ENCODE measurements at regions of chr6 and their contacts with region 1.

Region 1: DNA sequence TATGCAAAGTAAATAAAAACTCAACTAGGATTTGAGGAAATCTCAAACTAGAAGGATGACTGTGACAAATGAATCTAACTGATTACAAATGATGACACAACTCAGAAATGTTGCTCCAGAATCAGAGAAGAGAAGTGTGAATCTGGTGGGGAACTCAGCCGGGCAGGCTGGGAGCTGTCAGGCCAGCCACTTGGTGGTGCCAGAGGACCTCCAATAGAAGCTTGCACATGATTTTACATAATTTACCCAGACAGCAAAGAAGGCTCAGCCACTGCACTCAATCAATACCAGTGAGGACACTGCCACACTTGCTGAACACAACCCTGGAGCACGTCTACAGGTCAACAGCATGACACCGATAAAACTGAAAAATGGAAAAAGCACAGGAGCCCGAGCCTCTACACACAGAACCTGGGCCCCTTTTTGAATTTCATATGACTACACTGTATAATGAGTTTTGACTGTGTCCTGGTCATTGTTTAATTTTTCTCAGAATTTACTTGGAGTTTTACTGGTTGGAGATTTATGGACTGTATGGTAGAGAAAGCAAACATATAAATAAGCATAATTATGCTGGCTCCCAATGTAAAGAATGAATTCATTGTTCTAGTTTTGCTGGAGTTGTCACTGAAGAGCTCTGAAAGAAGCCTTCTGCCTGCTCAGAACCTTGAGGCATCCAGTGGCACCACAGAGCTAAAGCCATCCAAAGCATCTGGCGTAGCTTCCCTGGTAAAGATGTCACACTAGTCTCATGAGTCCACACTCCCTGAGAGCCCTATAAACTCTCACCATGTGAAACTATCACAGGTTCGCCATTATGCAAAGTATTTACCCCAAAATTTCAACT is 296.5 kb downstream of the THBS2 start:
- DNase-seq: no peak
- H3K4me3 ChIP-seq: no peak overlapping the region
- H3K27ac ChIP-seq: no peak overlapping the region
- H3K4me1 ChIP-seq: peaks cover 7 to 24% (median 14%) of the 10 kb centered on the region in 4 donors
- H3K27me3 ChIP-seq: no peaks in the 10 kb centered on the region
- CTCF ChIP-seq: peak; percentile 78 to 88 (median 84)
- EP300 ChIP-seq: no peak
- POLR2A ChIP-seq: no peak

Region 2: DNA sequence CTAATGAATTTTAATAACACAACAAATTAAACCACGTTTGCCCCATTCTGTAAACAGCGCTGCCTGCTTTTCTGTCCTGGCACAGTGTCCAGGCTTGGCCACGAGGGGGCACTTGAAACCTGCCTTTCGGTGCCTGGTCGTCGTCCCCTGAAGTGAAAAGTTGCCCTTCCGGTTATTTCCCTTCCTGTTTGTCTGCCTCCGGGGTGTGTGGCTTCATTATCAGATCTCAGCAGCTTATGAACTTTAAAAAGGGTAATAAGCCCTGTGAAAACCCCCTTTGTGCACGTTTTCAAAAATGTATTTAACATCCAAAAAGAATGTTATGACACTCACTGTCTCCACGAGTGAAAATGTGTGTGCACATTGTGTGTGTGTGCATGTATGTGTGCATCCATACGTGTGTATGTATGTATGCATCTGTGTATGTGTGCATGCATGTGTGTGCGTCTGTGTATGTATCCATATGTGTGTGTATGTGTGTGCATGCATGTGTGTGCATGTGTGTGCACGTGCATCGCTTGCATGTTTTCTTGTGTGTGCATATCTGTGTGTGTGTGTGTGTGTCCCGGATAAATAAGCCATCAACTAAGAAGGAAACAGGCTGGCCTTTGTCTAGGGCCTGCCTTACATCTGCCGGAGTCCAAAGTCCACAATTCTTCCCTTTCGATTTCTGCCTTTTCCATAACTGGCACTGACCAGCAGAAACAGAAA is 61.9 kb before region 1 on chr6:
- intact Hi-C with region 1: loop called (anchors 2 kb)
- DNase-seq: no peak
- H3K4me3 ChIP-seq: peak overlapping the region; percentile 14 to 44 (median 28)
- H3K27ac ChIP-seq: no peak overlapping the region
- H3K4me1 ChIP-seq: peaks cover 3 to 34% (median 32%) of the 10 kb centered on the region in 4 donors
- H3K27me3 ChIP-seq: no peaks in the 10 kb centered on the region
- CTCF ChIP-seq: peak in 2 of 3 experiments; percentile 91 to 93
- EP300 ChIP-seq: no peak
- POLR2A ChIP-seq: no peak

Region 3: DNA sequence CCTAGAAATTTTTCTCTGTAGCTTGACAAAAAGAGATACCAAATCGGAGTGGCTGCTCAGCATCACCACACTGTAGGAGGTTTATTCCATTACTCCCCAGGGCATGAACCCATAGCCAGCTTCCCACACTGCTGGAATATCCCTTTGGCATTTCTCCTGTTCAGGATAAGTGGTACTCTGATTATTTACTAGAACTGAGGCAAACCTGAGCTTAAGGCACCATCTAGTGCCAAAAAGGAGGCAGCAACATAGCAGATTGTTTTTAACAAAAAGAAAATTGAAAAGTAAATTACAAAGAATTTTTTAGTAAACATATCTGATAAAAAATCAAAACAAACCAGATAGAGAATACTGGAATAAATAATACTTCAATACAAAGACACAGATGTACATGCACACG is 563.0 kb after region 1 on chr6:
- intact Hi-C with region 1: loop called (anchors 5 kb)
- DNase-seq: no peak
- H3K4me3 ChIP-seq: no peak overlapping the region
- H3K27ac ChIP-seq: no peak overlapping the region
- H3K4me1 ChIP-seq: peaks cover 0 to 6% (median 0%) of the 10 kb centered on the region in 4 donors
- H3K27me3 ChIP-seq: no peaks in the 10 kb centered on the region
- CTCF ChIP-seq: peak; percentile 29 to 46 (median 33)
- EP300 ChIP-seq: no peak
- POLR2A ChIP-seq: no peak